ENCODE measurements at regions of chr9 and their contacts with region 1.

Region 1: GRCh38 chr9:31597977-31598376 is 786.5 kb upstream of the ACO1 start:
- DNase-seq: peak in 2 of 9 experiments; percentile 8 to 28
- ATAC-seq: peak; percentile 71
- H3K4me3 ChIP-seq: no peak overlapping the region
- H3K4me3 Mint-ChIP-seq: no peak overlapping the region
- H3K27ac ChIP-seq: no peak overlapping the region
- H3K27ac Mint-ChIP-seq: no peak overlapping the region
- H3K4me1 ChIP-seq: peaks cover 9% of the 10 kb centered on the region
- H3K4me1 Mint-ChIP-seq: peaks cover 10% of the 10 kb centered on the region
- H3K27me3 ChIP-seq: no peaks in the 10 kb centered on the region
- H3K27me3 Mint-ChIP-seq: no peaks in the 10 kb centered on the region
- CTCF ChIP-seq: no peak

Region 2: DNA sequence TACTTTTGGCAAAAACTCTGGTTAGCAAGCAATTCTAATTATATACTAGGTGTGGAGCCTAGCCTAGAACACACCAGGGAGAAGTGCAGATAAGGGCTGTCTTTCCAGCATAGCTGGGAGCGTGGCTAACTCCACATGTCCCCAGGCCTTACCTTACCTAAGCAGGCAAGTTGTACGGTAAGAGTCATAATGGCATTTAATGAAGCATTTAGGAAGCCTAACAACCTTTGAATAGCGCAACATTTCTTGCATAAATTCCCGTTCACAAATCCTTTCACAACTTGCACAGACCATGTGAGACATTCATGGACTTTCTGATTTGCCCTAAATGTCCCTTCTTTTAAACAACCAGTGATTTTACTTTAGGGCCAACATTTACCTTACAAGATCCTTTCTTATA is 130.9 kb before region 1 on chr9:
- CTCF ChIA-PET with region 1: no interaction called
- POLR2A ChIA-PET with region 1: no interaction called
- intact Hi-C with region 1: no loop called
- DNase-seq: no peak
- ATAC-seq: no peak
- H3K4me3 ChIP-seq: no peak overlapping the region
- H3K4me3 Mint-ChIP-seq: no peak overlapping the region
- H3K27ac ChIP-seq: no peak overlapping the region
- H3K27ac Mint-ChIP-seq: no peak overlapping the region
- H3K4me1 ChIP-seq: no peaks in the 10 kb centered on the region
- H3K4me1 Mint-ChIP-seq: peaks cover 12% of the 10 kb centered on the region
- H3K27me3 ChIP-seq: no peaks in the 10 kb centered on the region
- H3K27me3 Mint-ChIP-seq: no peaks in the 10 kb centered on the region
- CTCF ChIP-seq: no peak

Region 3: DNA sequence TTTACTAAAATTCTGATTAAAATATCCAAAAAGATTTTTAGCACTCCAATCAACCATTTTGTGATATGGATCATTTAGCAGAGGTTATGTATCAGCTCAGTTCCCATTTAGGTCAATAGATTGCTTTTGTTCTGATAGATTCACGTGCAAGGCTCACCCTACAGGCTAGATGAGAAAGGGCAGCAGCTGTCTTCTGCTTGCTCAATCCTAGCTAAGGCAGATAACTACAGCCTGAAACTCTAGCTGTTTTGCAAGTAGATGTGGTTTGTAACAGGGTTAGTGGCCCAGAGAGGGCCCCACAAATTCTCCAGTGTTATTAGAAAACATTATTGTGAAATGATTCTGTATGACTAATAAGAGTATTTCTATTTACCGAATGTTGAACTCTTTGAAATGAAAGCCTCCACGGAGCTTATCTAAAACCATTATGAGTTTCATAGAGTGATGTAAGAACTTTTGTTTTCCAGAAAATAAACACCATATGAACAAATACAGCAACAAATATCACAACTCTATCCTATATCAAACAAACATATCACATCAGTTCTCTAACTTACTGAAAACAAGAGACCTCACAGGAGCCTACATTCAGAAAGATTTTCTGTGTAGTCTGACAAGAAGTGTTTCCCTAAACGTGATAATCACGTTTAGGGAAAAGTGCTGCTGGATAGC is 55.5 kb before region 1 on chr9:
- CTCF ChIA-PET with region 1: no interaction called
- POLR2A ChIA-PET with region 1: no interaction called
- intact Hi-C with region 1: loop called in 1 of 2 experiments (anchors 5 kb)
- DNase-seq: peak in 2 of 9 experiments; percentile 44 to 45
- ATAC-seq: peak; percentile 55
- H3K4me3 ChIP-seq: no peak overlapping the region
- H3K4me3 Mint-ChIP-seq: peak overlapping the region; percentile 16
- H3K27ac ChIP-seq: no peak overlapping the region
- H3K27ac Mint-ChIP-seq: peak overlapping the region; percentile 56
- H3K4me1 ChIP-seq: no peaks in the 10 kb centered on the region
- H3K4me1 Mint-ChIP-seq: peaks cover 17% of the 10 kb centered on the region
- H3K27me3 ChIP-seq: no peaks in the 10 kb centered on the region
- H3K27me3 Mint-ChIP-seq: no peaks in the 10 kb centered on the region
- CTCF ChIP-seq: no peak

Region 4: DNA sequence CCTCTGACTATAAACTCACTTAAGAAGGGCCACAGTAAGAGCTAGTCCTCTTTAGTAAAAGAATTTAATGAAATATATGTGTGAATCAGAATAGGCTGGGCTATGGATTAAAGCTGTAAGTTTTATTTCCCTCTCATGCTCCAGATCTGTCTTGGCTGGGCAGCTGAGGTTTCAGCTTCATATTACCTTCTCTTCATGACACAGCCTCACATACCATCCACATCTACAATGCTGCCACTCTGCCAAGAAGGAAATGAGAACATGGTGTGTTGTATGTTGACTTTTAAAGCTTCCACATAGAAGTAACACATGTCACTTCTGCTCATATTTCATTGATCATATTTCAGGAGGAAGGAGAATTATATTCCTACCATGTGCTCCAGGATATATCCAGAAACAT is 10.4 kb after region 1 on chr9:
- CTCF ChIA-PET with region 1: no interaction called
- POLR2A ChIA-PET with region 1: interaction called, 3 read pairs
- intact Hi-C with region 1: loop called in 1 of 2 experiments (anchors 1 kb)
- DNase-seq: no peak
- ATAC-seq: no peak
- H3K4me3 ChIP-seq: no peak overlapping the region
- H3K4me3 Mint-ChIP-seq: no peak overlapping the region
- H3K27ac ChIP-seq: no peak overlapping the region
- H3K27ac Mint-ChIP-seq: no peak overlapping the region
- H3K4me1 ChIP-seq: no peaks in the 10 kb centered on the region
- H3K4me1 Mint-ChIP-seq: no peaks in the 10 kb centered on the region
- H3K27me3 ChIP-seq: no peaks in the 10 kb centered on the region
- H3K27me3 Mint-ChIP-seq: peaks cover 2% of the 10 kb centered on the region
- CTCF ChIP-seq: no peak